Caco-2 (cell line): ENCODE measurements at regions of chr7 and their contacts with region 1.

Region 1: DNA sequence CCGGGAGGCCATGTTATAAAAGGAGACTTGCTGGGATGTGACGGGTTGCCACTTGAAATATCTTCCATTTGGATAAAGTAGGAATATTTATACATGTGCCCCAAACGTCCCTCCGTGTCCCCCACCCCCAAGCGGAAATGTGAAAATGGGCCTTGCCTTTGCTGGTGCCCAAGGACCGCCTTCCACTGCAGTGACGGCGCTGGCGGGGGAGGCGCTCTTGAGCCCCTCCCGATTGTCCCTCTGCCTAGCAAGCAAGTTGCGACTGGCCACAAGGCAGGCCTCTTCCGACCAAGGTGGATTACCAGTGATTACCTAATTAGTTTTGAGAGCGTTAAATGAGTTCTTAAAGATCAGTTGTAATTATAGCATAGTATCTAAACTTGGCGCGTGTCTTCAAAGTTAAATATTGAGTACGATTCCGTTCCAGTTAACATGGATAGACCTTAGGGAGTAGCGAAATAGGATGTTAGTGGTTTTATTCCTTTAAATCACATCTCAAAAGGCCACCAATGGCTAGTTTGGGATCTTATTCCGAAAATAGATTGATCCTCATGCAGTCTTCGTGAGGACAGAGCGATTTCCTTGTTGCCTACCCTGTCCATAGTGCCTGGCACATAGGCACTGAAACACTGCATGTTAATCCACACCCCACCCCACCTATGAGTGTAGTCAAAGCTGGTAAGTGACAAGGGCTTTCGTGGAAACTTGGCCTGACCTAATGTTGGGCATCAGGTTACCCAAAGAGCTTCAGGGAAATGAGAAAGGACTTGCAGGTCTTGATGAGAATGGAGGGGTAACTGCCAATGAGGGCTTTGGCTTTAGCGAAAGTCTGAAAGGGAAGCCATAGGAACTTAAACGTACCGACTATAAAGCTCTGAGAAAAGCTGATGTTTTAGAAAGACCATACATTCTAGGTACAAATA is 1.1 kb downstream of the PPIA start:
- DNase-seq: peak; percentile 90
- H3K4me3 ChIP-seq: peak overlapping the region; percentile 100
- H3K4me3 Mint-ChIP-seq: peak overlapping the region; percentile 97
- H3K27ac Mint-ChIP-seq: peak overlapping the region; percentile 99
- H3K4me1 ChIP-seq: 0 out of 2 replicates have a peak, but pooled peaks cover 10% of the 10 kb centered on the region
- H3K4me1 Mint-ChIP-seq: no peaks in the 10 kb centered on the region
- H3K27me3 ChIP-seq: no peaks in the 10 kb centered on the region
- H3K27me3 Mint-ChIP-seq: no peaks in the 10 kb centered on the region
- CTCF ChIP-seq: peak; percentile 67 to 71

Region 2: GRCh38 chr7:44581879-44582603 is 215.5 kb before region 1 on chr7 and contains the start of gene TMED4:
- CTCF ChIA-PET with region 1: no interaction called
- POLR2A ChIA-PET with region 1: interaction called, 3 read pairs
- intact Hi-C with region 1: loop called (anchors 1 kb)
- DNase-seq: peak; percentile 99 to 100
- H3K4me3 ChIP-seq: peak within 1 kb of the TSS; percentile 80
- H3K4me3 Mint-ChIP-seq: peak within 1 kb of the TSS; percentile 86
- H3K27ac Mint-ChIP-seq: peak within 1 kb of the TSS; percentile 96
- H3K4me1 ChIP-seq: peaks cover 13% of the 10 kb centered on the region
- H3K4me1 Mint-ChIP-seq: peaks cover 7% of the 10 kb centered on the region
- H3K27me3 ChIP-seq: no peaks in the 10 kb centered on the region
- H3K27me3 Mint-ChIP-seq: no peaks in the 10 kb centered on the region
- CTCF ChIP-seq: no peak
- total RNA-seq, gene TMED4: 93.4 and 96.6 TPM in 2 replicates

Region 3: GRCh38 chr7:44724276-44724675 is 73.3 kb before region 1 on chr7:
- CTCF ChIA-PET with region 1: no interaction called
- POLR2A ChIA-PET with region 1: no interaction called
- intact Hi-C with region 1: no loop called
- DNase-seq: no peak
- H3K4me3 ChIP-seq: no peak overlapping the region
- H3K4me3 Mint-ChIP-seq: no peak overlapping the region
- H3K27ac Mint-ChIP-seq: no peak overlapping the region
- H3K4me1 ChIP-seq: peaks cover 8% of the 10 kb centered on the region; the same call in 1 of the 2 replicates
- H3K4me1 Mint-ChIP-seq: no peaks in the 10 kb centered on the region
- H3K27me3 ChIP-seq: no peaks in the 10 kb centered on the region
- H3K27me3 Mint-ChIP-seq: no peaks in the 10 kb centered on the region
- CTCF ChIP-seq: no peak

Region 4: DNA sequence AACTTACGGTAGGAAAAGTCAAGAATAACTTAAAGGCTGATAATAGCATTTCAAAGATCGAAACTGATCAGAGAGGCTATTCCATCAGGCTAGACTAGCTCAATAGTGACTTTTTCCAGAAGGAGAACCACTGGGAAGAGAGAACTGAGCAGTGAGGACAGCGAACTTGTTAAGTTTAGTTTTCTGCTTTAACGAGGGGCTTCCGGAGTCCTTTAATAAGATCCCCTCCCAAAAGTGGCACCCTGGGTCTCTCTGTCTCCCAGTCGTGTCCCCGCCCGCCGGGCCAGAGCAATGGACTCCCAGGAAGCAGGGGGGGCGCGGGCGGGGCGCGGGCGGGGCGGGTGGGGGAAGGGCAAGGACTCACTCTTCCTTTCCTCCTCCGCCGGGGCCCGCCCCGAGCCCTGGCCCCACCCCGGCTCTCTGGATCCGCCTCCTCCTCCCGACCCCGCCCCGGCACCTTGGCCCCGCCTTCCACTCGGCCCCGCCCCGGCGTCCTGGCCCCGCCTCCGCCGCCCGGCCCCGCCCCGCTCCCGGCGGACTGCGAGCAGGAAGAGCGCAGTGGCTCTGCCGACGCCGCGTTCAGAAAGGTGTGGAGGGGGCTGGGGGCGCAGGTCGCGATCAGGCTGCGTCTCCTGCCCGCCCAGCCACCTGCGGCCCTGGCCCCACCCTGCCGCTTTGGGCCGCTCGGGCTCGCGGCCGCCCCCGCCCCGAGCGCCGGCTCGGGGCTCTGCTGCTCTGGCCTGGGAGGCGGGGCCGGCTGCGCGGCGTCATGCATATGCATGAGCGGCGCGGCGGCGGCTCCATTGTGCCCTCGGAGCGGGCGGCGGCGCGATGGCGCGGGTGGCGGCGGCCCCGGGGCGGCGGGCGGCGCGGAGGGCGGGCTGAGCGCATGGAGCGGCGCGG is 49.3 kb before region 1 on chr7 and contains the start of gene ZMIZ2:
- CTCF ChIA-PET with region 1: no interaction called
- POLR2A ChIA-PET with region 1: no interaction called
- intact Hi-C with region 1: loop called (anchors 2 kb)
- DNase-seq: peak; percentile 92 to 96
- H3K4me3 ChIP-seq: peak within 1 kb of the TSS; percentile 96
- H3K4me3 Mint-ChIP-seq: peak within 1 kb of the TSS; percentile 83
- H3K27ac Mint-ChIP-seq: peak within 1 kb of the TSS; percentile 72
- H3K4me1 ChIP-seq: peaks cover 24% of the 10 kb centered on the region
- H3K4me1 Mint-ChIP-seq: peaks cover 18% of the 10 kb centered on the region
- H3K27me3 ChIP-seq: no peaks in the 10 kb centered on the region
- H3K27me3 Mint-ChIP-seq: no peaks in the 10 kb centered on the region
- CTCF ChIP-seq: no peak
- total RNA-seq, gene ZMIZ2: 69.0 and 72.1 TPM in 2 replicates

Region 5: GRCh38 chr7:44769776-44770662 is 27.6 kb before region 1 on chr7:
- CTCF ChIA-PET with region 1: interaction called, 3 read pairs
- POLR2A ChIA-PET with region 1: no interaction called
- intact Hi-C with region 1: loop called (anchors 2 kb)
- DNase-seq: no peak
- H3K4me3 ChIP-seq: no peak overlapping the region
- H3K4me3 Mint-ChIP-seq: no peak overlapping the region
- H3K27ac Mint-ChIP-seq: no peak overlapping the region
- H3K4me1 ChIP-seq: peaks cover 16% of the 10 kb centered on the region
- H3K4me1 Mint-ChIP-seq: peaks cover 16% of the 10 kb centered on the region
- H3K27me3 ChIP-seq: no peaks in the 10 kb centered on the region
- H3K27me3 Mint-ChIP-seq: no peaks in the 10 kb centered on the region
- CTCF ChIP-seq: no peak

Region 6: DNA sequence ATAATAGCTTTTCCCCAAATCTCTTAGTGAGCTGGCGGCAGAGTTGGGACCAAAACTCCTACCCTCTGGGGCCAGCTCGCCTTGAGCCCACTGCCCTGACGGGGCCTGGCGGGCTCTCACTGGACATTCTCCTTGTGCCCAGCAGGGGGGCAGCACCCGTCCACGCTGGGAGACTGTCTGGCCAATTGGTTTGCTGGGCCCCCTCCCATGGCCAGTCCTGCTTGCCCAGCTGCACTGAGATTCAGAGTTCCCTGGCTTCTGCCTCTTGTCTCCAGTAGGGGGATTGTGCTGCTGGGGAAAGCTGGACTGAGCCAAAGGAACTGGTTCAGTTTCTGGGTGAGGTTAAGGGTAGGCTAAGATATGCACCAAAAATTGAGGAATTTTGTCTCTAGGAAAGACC is 419.8 kb after region 1 on chr7:
- CTCF ChIA-PET with region 1: no interaction called
- POLR2A ChIA-PET with region 1: no interaction called
- intact Hi-C with region 1: no loop called
- DNase-seq: peak; percentile 47 to 58
- H3K4me3 ChIP-seq: no peak overlapping the region
- H3K4me3 Mint-ChIP-seq: no peak overlapping the region
- H3K27ac Mint-ChIP-seq: no peak overlapping the region
- H3K4me1 ChIP-seq: no peaks in the 10 kb centered on the region
- H3K4me1 Mint-ChIP-seq: no peaks in the 10 kb centered on the region
- H3K27me3 ChIP-seq: peaks cover 1% of the 10 kb centered on the region; the same call in 1 of the 2 replicates
- H3K27me3 Mint-ChIP-seq: peaks cover 33% of the 10 kb centered on the region
- CTCF ChIP-seq: peak; percentile 58 to 83